Activated CD4-positive, alpha-beta T cell treated with anti-CD3 and anti-CD28 coated beads for 36 hours (primary cell): ENCODE measurements at regions of chr5 and their contacts with region 1.

Region 1: GRCh38 chr5:59327191-59327980 is 566.1 kb downstream of the PDE4D start:
- DNase-seq: no peak
- ATAC-seq: no peak
- H3K4me3 Mint-ChIP-seq: no peak overlapping the region
- H3K27ac Mint-ChIP-seq: no peak overlapping the region
- H3K4me1 Mint-ChIP-seq: no peaks in the 10 kb centered on the region
- H3K27me3 Mint-ChIP-seq: no peaks in the 10 kb centered on the region

Region 2: GRCh38 chr5:59766427-59767210 is 439.2 kb after region 1 on chr5:
- CTCF ChIA-PET with region 1: no interaction called
- POLR2A ChIA-PET with region 1: interaction called, 16 read pairs
- intact Hi-C with region 1: no loop called
- DNase-seq: no peak
- ATAC-seq: no peak
- H3K4me3 Mint-ChIP-seq: peak overlapping the region; percentile 58
- H3K27ac Mint-ChIP-seq: no peak overlapping the region
- H3K4me1 Mint-ChIP-seq: peaks cover 8% of the 10 kb centered on the region
- H3K27me3 Mint-ChIP-seq: peaks cover 30% of the 10 kb centered on the region

Region 3: GRCh38 chr5:60743467-60744314 is 1416.3 kb after region 1 on chr5:
- CTCF ChIA-PET with region 1: no interaction called
- POLR2A ChIA-PET with region 1: no interaction called
- intact Hi-C with region 1: no loop called
- DNase-seq: no peak
- ATAC-seq: no peak
- H3K4me3 Mint-ChIP-seq: no peak overlapping the region
- H3K27ac Mint-ChIP-seq: no peak overlapping the region
- H3K4me1 Mint-ChIP-seq: no peaks in the 10 kb centered on the region
- H3K27me3 Mint-ChIP-seq: peaks cover 5% of the 10 kb centered on the region